ENCODE measurements at regions of chr1 and their contacts with region 1.

Region 1: DNA sequence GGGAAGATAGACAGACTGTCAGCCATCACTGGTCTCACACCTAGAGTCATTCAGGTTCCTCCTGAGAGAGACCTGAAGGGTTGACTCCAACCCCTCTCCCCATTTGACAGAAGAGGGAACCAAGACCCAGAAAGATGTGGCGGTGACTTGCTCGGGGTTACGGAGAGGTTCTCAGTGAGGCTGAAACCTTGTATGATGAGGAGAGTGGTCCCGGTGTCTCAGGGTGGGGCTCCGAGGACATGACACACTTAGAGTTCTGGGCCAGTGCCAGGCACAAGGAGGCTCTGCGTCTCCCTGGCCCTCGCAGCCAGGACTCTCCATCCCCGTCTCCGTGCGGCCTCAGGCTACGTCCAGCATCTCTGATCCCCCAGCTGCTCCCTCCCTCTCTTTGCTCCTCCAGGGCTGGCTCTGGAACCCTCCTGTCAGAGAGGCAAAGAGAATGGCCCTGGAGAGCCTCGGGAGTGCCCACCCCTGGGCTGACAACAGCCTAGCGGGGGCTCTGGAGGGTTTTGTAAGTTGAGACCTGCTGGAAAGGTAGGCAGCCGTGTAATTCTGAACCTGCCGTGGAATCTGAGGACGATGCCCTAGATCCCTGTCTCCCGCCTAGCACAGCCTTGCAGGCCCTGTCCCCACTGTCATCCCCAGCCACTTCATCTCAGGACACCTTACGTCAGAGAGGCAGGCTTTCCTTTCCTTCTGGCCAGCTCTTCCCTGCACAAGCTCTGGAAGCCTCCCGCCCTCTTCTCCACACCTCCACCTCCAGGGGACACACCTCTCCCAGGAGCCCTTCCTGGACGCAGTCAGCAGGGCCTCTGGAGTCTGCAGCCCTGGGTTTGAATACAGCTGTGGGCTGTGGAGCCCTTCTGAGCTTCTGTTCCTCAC is 4.1 kb downstream of the EFHD2 start:
- DNase-seq: no peak

Region 2: DNA sequence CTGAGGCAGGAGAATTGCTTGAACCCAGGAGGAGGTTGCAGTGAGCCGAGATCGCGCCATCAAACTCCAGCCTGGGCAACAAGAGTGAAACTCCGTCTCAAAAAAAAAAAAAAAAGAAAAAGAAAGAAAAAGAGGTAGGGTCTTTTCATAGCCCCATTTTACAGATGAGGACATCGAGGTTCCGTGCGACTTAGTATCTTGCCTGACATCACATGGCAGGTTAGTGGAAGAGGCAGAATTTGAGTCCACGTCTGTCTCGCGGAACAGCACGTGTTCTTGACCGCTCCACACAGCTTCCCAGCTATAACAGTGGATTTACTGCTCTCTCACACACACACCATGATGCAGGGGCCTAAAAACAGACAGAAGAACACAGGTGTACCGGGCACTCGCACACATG is 25.5 kb after region 1 on chr1:
- intact Hi-C with region 1: loop called in 1 of 2 experiments (anchors 2 kb)
- DNase-seq: no peak

Region 3: DNA sequence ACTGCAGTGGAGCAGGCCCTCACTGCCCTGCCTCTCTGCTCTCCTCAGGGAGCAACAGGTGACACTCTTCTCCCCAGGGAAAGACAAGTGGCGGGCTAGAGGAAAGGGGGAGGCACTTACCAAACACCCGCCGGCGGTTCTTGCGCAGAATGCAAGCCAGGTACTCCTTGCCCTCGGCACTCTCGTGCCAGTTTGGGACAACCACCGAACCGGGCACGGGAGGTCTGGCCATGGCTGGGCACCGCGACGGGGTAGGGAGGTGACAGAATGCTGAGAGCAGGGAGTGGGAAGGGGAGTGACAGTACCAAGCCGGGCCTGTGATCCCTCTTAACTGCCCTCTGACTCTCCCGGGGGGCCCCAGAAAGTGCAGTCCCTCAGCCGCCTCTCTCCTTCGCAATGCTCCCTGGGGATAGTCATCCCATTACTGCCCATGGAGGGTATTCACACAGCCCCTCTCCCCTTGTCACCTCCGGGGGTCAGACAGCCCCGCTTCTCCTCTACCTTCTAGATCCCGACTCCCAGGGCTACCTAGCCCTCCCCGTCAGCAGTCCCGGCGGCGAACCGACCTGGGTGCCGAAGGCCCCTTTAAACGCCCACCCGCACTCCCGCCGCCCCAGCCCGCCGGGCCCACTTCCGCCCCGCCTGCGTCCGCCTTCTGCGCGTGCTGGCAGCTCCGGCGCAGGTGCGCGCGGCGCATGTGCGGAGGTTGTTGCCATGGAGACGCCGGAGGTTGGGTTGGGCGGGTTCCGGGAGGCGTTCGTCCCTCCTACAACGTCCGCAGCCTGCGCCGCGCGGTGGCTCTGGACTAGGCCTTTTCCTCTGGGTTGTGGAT is 822.9 kb after region 1 on chr1 and contains the start of gene CPLANE2:
- intact Hi-C with region 1: no loop called
- DNase-seq: peak; percentile 98
- total RNA-seq, gene CPLANE2: 4.1 to 5.2 TPM

Region 4: DNA sequence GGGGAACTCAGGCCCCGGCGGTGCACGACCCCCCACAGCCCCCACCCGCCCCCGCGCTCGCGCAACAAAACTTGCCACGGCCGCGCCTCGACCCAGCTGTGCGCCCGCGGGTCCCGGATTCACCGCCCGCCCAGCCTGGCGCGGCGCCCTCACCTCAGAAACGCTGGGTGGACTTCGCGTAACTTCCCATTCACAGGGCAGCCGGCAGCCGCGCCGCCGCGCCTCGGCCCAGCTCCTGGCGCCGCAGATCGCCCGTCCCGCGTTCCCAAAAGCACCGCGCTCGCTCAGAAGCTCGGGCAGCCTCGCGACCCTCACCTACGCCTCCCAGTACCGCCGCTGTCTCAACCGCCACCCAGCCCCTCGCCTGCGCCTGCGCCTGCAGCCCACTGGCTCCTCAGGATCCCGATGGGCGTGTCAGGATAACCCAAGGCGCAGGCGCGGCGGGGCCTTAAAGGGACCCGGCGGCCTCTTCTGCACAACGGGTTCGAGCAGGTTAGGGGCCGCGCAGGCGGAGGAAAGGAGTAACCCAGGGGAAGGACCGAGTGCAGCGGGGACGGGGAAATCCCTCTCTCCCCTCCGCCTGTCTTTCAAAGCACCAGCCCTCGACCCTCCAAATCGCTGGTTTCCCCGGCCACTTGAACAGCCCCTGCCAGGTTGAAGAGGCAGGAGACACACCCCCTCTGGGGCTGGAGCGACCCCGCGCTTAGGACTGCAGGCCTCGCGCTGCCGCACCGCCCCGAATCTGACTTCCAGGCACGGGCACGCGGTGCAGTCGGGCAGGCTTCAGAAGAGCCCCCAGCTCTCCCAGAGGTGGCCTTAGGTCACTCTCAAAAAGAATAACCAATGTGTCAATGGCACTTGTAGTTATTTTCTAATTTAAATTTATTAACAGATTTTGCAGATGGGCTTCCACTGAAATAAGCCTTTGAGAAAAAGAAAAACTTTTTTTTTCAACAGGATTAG is 1199.7 kb after region 1 on chr1 and contains the start of gene NBPF1:
- intact Hi-C with region 1: no loop called
- DNase-seq: peak; percentile 99
- total RNA-seq, gene NBPF1: 28.9 to 63.0 TPM

Measured in posterior vena cava (tissue), 2 donors.